ENCODE measurements at regions of chr1 and their contacts with region 1.

Region 1: GRCh38 chr1:8817406-8818324 is at the start of gene RERE:
- DNase-seq: peak; percentile 89 to 96 (median 93)
- H3K4me3 ChIP-seq: peak within 1 kb of the TSS; percentile 48 to 94 (median 83)
- H3K27ac ChIP-seq: peak within 1 kb of the TSS; percentile 77 to 99 (median 96)
- H3K27me3 ChIP-seq: no peaks in the 10 kb centered on the region
- CTCF ChIP-seq: peak in 28 of 56 donors; percentile 7 to 46 (median 24)
- total RNA-seq, gene RERE: 286 to 583 (median 367) TPM

Region 2: DNA sequence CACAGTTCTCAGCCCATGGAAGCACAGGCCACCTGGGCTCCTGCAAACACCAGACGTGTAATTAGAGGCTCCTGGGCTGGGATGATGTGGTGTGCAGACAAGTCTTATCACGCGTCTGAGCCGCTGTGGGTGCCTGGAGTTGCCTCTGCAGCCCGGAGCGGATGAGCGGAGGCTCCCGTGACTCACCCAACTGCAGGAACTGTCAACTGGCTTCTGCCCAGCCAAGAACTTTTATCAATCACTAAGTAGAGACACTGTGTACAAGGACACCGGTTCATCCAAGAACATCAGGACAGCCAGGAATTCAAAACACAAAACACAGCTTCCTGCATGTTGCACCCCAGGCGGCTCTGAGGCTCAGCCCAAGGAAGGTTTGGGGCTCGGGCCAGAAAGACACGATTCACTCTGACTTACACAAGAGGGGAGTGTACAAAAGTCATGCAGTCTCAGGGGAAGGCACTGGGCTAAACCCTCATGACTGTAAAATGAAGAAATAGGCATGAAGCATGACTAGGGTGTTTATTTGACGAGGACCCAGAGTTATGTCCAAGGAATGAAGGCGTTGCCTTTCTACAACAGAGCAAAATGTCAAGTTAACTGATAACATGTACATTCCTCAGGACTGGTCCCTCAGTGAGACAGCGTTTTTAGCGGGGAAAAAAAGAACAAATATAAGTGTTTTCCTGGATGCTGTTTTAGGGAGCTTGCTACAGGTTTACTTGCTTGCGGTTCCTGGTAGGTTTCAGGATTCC is 812.7 kb before region 1 on chr1:
- intact Hi-C with region 1: no loop called
- DNase-seq: peak in 5 of 10 donors; percentile 43 to 71 (median 50)
- H3K4me3 ChIP-seq: peak overlapping the region in 47 of 59 donors; percentile 1 to 61 (median 36)
- H3K27ac ChIP-seq: peak overlapping the region in 47 of 59 donors; percentile 0 to 80 (median 57)
- H3K27me3 ChIP-seq: no peaks in the 10 kb centered on the region
- CTCF ChIP-seq: peak in 1 of 56 donors; percentile 9

Region 3: GRCh38 chr1:8424539-8425116 is 393.0 kb before region 1 on chr1:
- intact Hi-C with region 1: no loop called
- DNase-seq: peak in 2 of 10 donors; percentile 10 to 55
- H3K4me3 ChIP-seq: peak overlapping the region; percentile 54 to 89 (median 73)
- H3K27ac ChIP-seq: peak overlapping the region; percentile 42 to 98 (median 94)
- H3K27me3 ChIP-seq: no peaks in the 10 kb centered on the region
- CTCF ChIP-seq: no peak

Region 4: GRCh38 chr1:8702850-8703810 is 114.5 kb before region 1 on chr1:
- intact Hi-C with region 1: loop called (anchors 2 kb)
- DNase-seq: peak; percentile 85 to 93 (median 90)
- H3K4me3 ChIP-seq: peak overlapping the region; percentile 47 to 82 (median 67)
- H3K27ac ChIP-seq: peak overlapping the region; percentile 8 to 94 (median 83)
- H3K27me3 ChIP-seq: no peaks in the 10 kb centered on the region
- CTCF ChIP-seq: peak in 47 of 56 donors; percentile 8 to 61 (median 34)

Region 5: DNA sequence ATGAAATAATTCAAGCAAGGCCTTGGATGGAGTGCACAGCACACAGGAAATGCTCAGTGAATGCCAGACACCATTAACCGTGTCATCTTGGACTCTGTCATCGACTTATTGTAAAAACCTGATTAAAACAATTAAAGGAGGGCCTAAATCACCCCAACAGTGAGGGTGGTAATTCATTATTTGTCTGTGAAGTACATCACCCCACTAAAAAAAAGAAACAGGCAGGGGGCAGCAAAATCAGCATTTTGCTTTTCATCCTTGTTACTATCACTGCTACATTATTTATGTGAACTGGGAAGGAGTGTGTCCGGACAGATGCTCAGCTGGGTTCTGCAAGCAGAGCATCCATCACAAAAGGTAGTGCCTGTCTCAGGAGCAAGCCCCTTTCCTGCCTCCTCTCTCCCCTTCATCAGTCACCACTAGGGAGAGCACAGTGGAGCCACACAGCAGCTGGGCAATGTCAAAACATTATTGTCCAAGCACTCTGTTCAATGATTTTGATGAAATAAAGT is 98.8 kb before region 1 on chr1:
- intact Hi-C with region 1: loop called in 1 of 2 experiments (anchors 5 kb)
- DNase-seq: no peak
- H3K4me3 ChIP-seq: no peak overlapping the region
- H3K27ac ChIP-seq: peak overlapping the region in 5 of 59 donors; percentile 2 to 47 (median 18)
- H3K27me3 ChIP-seq: no peaks in the 10 kb centered on the region
- CTCF ChIP-seq: peak in 55 of 56 donors; percentile 24 to 69 (median 52)

Region 6: DNA sequence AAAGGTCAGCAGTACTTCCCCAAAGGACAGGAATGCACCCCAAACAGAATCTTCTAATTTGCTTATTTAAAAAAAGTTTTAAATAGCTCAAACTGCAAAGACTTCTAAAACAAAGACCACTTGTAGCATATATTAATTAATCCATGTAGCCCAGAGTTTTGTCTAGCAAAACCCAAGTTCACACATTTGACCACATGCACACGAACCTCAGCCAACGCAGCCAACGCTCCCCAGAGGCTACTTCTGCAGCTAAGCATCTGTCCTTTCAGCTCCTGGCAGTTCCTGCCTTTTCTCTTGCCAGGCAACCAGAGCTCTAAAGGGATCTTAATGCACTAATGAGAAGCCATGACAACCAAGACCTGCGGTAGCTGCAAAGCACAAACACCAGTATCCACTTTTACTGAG is 89.9 kb before region 1 on chr1:
- intact Hi-C with region 1: loop called (anchors 5 kb)
- DNase-seq: peak in 4 of 10 donors; percentile 38 to 53 (median 46)
- H3K4me3 ChIP-seq: no peak overlapping the region
- H3K27ac ChIP-seq: peak overlapping the region in 38 of 59 donors; percentile 1 to 63 (median 38)
- H3K27me3 ChIP-seq: no peaks in the 10 kb centered on the region
- CTCF ChIP-seq: peak in 2 of 56 donors; percentile 4 to 5

Region 7: DNA sequence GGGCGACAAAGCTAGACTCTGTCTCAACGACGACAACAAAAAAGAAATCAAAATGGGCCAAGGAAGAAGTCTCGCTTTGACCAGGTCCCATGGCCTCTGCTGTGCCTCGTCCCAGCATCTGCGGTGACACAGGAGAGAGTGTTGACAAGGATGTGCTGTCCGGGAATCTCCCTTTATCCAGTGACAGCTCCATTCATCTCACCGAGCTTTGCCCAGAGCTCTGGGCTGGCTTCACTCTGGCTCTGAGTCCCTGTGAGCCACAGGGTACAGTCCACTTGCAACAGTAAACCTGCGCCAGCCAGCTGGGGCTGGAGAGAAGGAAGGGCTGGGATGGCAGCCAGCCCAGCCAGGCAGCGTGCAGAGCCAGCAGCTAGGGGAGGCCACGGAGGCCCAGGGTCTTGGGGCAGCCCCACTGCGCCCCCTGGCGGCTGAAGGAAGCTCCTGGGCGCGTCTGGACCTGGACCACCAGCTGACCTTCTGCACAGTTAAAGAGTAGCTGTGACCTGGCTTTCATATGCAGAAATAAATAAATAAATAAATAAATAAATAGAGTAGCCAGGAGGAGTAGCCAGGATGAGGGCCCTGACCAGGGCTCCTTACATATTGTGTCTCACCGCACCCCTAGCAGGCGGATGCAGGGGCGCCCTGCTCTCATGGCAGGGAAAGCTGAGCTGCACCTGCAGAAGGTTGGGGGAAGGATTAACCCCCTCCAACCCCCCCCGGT is 31.2 kb after region 1 on chr1:
- intact Hi-C with region 1: loop called (anchors 2 kb)
- DNase-seq: peak; percentile 79 to 91 (median 88)
- H3K4me3 ChIP-seq: peak overlapping the region in 32 of 59 donors; percentile 5 to 50 (median 27)
- H3K27ac ChIP-seq: peak overlapping the region in 54 of 59 donors; percentile 4 to 88 (median 68)
- H3K27me3 ChIP-seq: no peaks in the 10 kb centered on the region
- CTCF ChIP-seq: peak; percentile 81 to 99 (median 94)

Region 8: GRCh38 chr1:8858888-8859706 is 41.4 kb after region 1 on chr1:
- intact Hi-C with region 1: no loop called
- DNase-seq: peak in 4 of 10 donors; percentile 47 to 68 (median 52)
- H3K4me3 ChIP-seq: no peak overlapping the region
- H3K27ac ChIP-seq: peak overlapping the region in 20 of 59 donors; percentile 2 to 68 (median 30)
- H3K27me3 ChIP-seq: no peaks in the 10 kb centered on the region
- CTCF ChIP-seq: peak; percentile 39 to 79 (median 68)

Region 9: DNA sequence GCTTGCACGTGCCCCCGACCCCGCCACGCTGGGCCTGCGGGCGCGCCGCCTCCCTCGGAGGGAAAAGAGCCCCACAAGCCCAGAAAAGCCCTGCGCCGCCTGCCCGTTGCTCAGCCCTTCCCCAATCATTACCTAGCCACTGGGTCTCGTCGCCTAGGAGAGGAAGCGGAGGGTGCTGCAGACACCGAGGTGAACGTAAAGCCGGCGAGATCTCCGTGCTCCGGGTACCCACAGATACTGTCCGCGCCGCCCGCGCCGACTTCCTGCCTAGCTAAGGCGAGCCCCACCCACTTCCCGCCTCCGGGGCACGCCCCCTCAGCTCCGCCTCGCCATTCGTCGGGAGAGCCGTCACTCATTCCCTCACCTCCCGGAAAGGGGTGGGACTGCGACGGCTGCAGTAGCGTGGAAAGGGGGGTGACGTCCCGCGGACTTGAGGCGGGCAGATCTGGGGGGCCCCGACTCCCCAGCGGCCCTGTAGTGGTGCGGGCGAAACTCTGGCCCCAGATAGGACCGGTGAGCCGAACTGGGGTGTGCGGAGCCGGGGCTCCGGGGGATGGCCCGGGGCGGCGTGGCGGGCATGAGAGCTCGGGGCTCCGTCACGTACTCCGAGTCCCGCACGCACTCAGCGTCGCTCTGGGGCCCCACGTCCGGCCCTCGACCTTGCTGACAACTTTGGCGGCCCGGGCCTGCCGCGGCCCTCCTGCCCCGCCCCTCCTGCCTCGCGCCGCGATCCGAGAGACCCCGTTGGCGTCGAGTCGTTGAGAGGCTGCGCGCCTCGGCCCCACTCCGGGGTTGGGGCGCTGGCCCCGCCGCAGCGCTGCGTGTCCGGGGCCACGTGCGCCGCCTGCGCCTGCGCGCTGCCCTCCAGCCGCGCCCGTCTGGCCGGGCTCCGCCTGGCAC is 61.0 kb after region 1 on chr1 and contains the start of gene ENO1:
- intact Hi-C with region 1: loop called in 1 of 2 experiments (anchors 10 kb)
- DNase-seq: peak; percentile 99 to 100 (median 99)
- H3K4me3 ChIP-seq: peak within 1 kb of the TSS; percentile 67 to 100 (median 95)
- H3K27ac ChIP-seq: peak within 1 kb of the TSS; percentile 71 to 100 (median 98)
- H3K27me3 ChIP-seq: no peaks in the 10 kb centered on the region
- CTCF ChIP-seq: peak in 8 of 56 donors; percentile 5 to 25 (median 15)
- total RNA-seq, gene ENO1: 469 to 938 (median 635) TPM

Region 10: GRCh38 chr1:9455487-9456234 is 638.0 kb after region 1 on chr1:
- intact Hi-C with region 1: no loop called
- DNase-seq: peak; percentile 17 to 79 (median 66)
- H3K4me3 ChIP-seq: no peak overlapping the region
- H3K27ac ChIP-seq: peak overlapping the region in 1 of 59 donors; percentile 24
- H3K27me3 ChIP-seq: no peaks in the 10 kb centered on the region
- CTCF ChIP-seq: peak; percentile 35 to 97 (median 85)

Measured in dorsolateral prefrontal cortex (tissue), 120 donors.